Natural killer cell (primary cell): ENCODE measurements at regions of chr5 and their contacts with region 1.

Region 1: DNA sequence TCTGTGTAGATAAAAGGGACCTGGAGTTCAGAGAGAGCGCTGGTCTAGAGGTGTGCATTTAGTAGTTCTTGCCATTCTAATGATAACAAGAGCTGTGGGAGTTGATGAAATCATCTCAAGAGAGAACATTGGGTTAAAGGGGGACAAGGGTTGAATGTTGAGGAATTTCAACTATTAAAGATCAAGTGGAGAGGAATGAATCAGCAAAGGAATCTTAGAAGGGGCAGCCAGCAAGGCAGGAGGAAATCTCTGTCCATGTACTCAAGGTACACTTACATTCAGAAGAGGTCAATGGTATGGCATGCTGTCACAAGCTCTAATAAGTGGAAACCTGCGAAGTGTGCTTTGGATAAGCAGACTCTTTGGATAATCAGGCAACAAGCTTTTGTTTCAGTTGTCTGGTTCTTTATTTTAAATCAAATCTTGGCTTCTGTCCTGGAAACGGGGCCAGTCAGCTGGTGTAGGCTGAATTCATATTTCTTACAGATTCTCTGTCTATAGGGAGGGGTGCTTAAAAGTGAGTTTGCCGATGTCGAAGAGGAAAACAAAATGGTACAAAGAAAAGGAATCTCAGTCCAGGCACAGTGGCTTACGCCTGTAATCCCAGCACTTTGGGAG is 320.5 kb upstream of the CD180 start:
- DNase-seq: no peak
- ATAC-seq: no peak
- H3K4me3 ChIP-seq: no peak overlapping the region
- H3K4me3 Mint-ChIP-seq: no peak overlapping the region
- H3K27ac ChIP-seq: no peak overlapping the region
- H3K27ac Mint-ChIP-seq: peak overlapping the region in 1 of 2 donors; percentile 88
- H3K4me1 ChIP-seq: peaks cover 42% of the 10 kb centered on the region
- H3K4me1 Mint-ChIP-seq: peaks cover 58 to 65% of the 10 kb centered on the region in 2 donors
- H3K27me3 ChIP-seq: no peaks in the 10 kb centered on the region
- H3K27me3 Mint-ChIP-seq: no peaks in the 10 kb centered on the region
- CTCF ChIP-seq: no peak

Region 2: GRCh38 chr5:67102708-67103107 is 414.3 kb before region 1 on chr5:
- intact Hi-C with region 1: no loop called
- DNase-seq: no peak
- ATAC-seq: no peak
- H3K4me3 ChIP-seq: no peak overlapping the region
- H3K4me3 Mint-ChIP-seq: no peak overlapping the region
- H3K27ac ChIP-seq: no peak overlapping the region
- H3K27ac Mint-ChIP-seq: no peak overlapping the region
- H3K4me1 ChIP-seq: no peaks in the 10 kb centered on the region
- H3K4me1 Mint-ChIP-seq: no peaks in the 10 kb centered on the region
- H3K27me3 ChIP-seq: no peaks in the 10 kb centered on the region
- H3K27me3 Mint-ChIP-seq: no peaks in the 10 kb centered on the region
- CTCF ChIP-seq: no peak

Region 3: GRCh38 chr5:67165526-67166459 is 351.3 kb before region 1 on chr5:
- intact Hi-C with region 1: loop called (anchors 5 kb)
- DNase-seq: peak; percentile 75 to 89
- ATAC-seq: peak; percentile 80 to 91 (median 83)
- H3K4me3 ChIP-seq: peak overlapping the region; percentile 58
- H3K4me3 Mint-ChIP-seq: peak overlapping the region; percentile 90
- H3K27ac ChIP-seq: peak overlapping the region; percentile 97
- H3K27ac Mint-ChIP-seq: peak overlapping the region; percentile 92 to 97
- H3K4me1 ChIP-seq: peaks cover 36% of the 10 kb centered on the region
- H3K4me1 Mint-ChIP-seq: peaks cover 50 to 60% of the 10 kb centered on the region in 2 donors
- H3K27me3 ChIP-seq: no peaks in the 10 kb centered on the region
- H3K27me3 Mint-ChIP-seq: no peaks in the 10 kb centered on the region
- CTCF ChIP-seq: peak; percentile 73

Region 4: GRCh38 chr5:67453111-67453905 is 63.7 kb before region 1 on chr5:
- intact Hi-C with region 1: no loop called
- DNase-seq: no peak
- ATAC-seq: no peak
- H3K4me3 ChIP-seq: no peak overlapping the region
- H3K4me3 Mint-ChIP-seq: no peak overlapping the region
- H3K27ac ChIP-seq: no peak overlapping the region
- H3K27ac Mint-ChIP-seq: no peak overlapping the region
- H3K4me1 ChIP-seq: no peaks in the 10 kb centered on the region
- H3K4me1 Mint-ChIP-seq: peaks cover 0 to 4% of the 10 kb centered on the region in 2 donors
- H3K27me3 ChIP-seq: no peaks in the 10 kb centered on the region
- H3K27me3 Mint-ChIP-seq: no peaks in the 10 kb centered on the region
- CTCF ChIP-seq: no peak

Region 5: DNA sequence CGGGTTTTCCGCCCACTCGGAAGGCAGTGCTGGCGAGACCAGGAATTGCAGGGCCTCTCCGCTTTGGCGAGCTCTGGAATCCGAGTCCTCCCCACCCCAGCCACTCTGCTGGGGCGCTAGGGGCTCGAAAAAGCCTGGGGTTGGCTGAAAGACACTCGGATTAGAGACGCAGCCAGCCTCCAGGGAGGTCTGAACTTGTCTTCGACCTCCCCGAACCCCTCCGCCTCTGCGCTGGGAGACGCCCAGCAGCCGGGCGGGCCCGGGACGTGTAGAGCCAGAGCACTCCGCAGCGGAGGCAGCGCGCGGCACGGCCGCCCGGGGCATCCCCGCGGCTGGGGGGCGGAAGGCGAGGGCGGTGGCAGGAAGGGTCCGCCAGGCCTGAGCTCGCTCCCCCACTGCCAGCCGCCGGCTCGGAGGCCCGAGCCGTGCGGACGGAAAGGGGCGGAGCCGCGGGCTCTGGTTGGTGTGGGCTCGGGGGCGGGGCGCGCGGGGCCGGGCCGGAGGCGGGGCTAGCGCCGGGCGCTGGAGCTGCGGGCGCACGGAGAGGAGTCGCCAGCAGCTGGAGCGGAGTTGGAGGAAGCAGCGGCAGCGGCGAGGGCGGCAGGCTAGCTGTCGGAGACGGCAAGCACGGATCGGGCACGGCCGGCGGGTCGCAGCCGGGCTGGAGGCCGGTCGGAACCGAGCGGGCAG is 698.3 kb after region 1 on chr5 and contains the start of gene PIK3R1:
- intact Hi-C with region 1: loop called (anchors 10 kb)
- DNase-seq: peak; percentile 95
- ATAC-seq: peak; percentile 81 to 95 (median 86)
- H3K4me3 ChIP-seq: peak within 1 kb of the TSS; percentile 94
- H3K4me3 Mint-ChIP-seq: peak within 1 kb of the TSS; percentile 92
- H3K27ac ChIP-seq: peak within 1 kb of the TSS; percentile 98
- H3K27ac Mint-ChIP-seq: peak within 1 kb of the TSS; percentile 86 to 90
- H3K4me1 ChIP-seq: peaks cover 13% of the 10 kb centered on the region
- H3K4me1 Mint-ChIP-seq: peaks cover 38 to 48% of the 10 kb centered on the region in 2 donors
- H3K27me3 ChIP-seq: no peaks in the 10 kb centered on the region
- H3K27me3 Mint-ChIP-seq: no peaks in the 10 kb centered on the region
- CTCF ChIP-seq: peak; percentile 19
- total RNA-seq, gene PIK3R1: 307 to 365 (median 313) TPM

Region 6: DNA sequence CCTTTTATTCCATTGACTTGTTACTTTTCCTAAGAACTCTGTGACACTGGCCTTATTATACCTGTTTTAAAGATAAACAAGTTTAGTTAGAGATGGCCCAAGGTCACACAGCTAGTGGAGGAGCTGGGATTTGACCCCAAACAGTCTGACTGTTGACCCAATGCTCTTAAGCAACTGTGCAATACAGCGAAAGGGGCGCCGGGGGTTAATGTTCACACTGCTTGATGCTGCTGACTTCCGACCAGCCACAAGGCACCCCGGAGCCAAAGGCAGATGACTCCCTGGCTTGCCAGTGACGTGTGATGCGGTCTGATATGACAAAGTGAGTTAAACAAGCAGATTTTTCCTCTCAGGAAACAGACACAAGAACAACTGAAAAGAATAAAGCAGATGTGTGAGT is 722.4 kb after region 1 on chr5:
- intact Hi-C with region 1: loop called (anchors 5 kb)
- DNase-seq: peak; percentile 78 to 92
- ATAC-seq: peak; percentile 92 to 98 (median 96)
- H3K4me3 ChIP-seq: no peak overlapping the region
- H3K4me3 Mint-ChIP-seq: peak overlapping the region; percentile 64
- H3K27ac ChIP-seq: peak overlapping the region; percentile 71
- H3K27ac Mint-ChIP-seq: peak overlapping the region; percentile 86 to 98
- H3K4me1 ChIP-seq: peaks cover 31% of the 10 kb centered on the region
- H3K4me1 Mint-ChIP-seq: peaks cover 77 to 79% of the 10 kb centered on the region in 2 donors
- H3K27me3 ChIP-seq: no peaks in the 10 kb centered on the region
- H3K27me3 Mint-ChIP-seq: no peaks in the 10 kb centered on the region
- CTCF ChIP-seq: no peak

Region 7: DNA sequence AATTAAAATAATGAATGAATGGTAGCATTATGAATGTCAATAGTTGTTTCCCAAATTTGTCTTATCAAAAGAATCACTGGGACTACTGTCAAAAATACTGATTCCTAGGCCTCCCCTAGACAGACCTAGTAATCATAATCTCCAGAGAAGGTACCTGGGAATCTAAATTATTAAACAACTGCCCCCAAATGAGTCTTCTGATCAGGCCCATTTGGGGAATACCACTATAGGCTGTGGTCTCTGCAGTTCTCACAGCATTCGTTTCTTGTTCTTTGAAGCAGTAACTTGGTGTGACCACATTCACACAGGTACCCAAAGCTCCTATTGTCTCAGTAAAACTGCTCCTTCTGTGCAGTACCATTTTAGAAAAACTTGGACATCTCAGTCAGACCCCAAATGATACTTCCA is 929.4 kb after region 1 on chr5:
- intact Hi-C with region 1: loop called (anchors 10 kb)
- DNase-seq: no peak
- ATAC-seq: peak in 1 of 3 donors; percentile 40
- H3K4me3 ChIP-seq: no peak overlapping the region
- H3K4me3 Mint-ChIP-seq: no peak overlapping the region
- H3K27ac ChIP-seq: no peak overlapping the region
- H3K27ac Mint-ChIP-seq: no peak overlapping the region
- H3K4me1 ChIP-seq: peaks cover 16% of the 10 kb centered on the region
- H3K4me1 Mint-ChIP-seq: peaks cover 8 to 10% of the 10 kb centered on the region in 2 donors
- H3K27me3 ChIP-seq: no peaks in the 10 kb centered on the region
- H3K27me3 Mint-ChIP-seq: peaks cover 0 to 3% of the 10 kb centered on the region in 2 donors
- CTCF ChIP-seq: no peak